Adrenal gland (tissue), 19 donors: ENCODE measurements at regions of chr9 and their contacts with region 1.

Region 1: DNA sequence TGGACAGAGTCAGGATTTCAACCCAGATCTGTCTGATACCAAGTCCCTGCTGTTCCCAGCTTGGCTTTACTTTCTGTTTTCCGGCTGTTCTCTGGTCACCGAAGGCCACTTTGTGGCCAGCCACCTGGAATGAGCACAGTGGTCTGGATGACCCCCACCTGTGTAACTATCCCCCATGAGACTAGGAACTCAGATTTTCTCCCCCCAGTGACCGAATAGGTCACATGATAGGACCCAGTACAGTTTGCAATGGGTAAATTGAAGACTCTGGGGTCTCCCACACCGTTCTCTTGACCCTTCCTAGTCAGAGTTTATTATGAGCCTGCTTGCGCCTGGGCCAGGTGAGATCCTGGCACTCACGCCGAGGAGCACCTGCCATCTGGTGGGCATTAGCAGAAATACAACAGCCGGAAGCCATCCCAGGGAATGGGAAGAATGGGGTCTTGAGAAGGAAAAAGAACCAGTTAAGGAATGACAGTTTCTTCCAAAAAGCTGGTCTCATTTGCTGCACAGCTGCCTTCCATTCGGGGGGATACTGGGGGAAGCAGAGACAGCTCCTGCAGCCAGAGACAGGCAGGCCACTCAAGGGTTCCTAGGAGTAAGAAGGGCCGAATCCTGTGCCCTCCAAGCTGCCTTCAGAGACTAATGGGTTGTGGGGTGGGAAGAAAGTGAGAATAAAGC is 7.1 kb downstream of the PHYHD1 start:
- DNase-seq: peak in 6 of 7 donors; percentile 42 to 78 (median 58)
- H3K4me3 ChIP-seq: no peak overlapping the region
- H3K27ac ChIP-seq: no peak overlapping the region
- H3K4me1 ChIP-seq: peaks cover 2 to 10% of the 10 kb centered on the region in 2 donors
- H3K27me3 ChIP-seq: no peaks in the 10 kb centered on the region
- CTCF ChIP-seq: peak; percentile 78 to 92 (median 88)
- POLR2A ChIP-seq: no peak

Region 2: DNA sequence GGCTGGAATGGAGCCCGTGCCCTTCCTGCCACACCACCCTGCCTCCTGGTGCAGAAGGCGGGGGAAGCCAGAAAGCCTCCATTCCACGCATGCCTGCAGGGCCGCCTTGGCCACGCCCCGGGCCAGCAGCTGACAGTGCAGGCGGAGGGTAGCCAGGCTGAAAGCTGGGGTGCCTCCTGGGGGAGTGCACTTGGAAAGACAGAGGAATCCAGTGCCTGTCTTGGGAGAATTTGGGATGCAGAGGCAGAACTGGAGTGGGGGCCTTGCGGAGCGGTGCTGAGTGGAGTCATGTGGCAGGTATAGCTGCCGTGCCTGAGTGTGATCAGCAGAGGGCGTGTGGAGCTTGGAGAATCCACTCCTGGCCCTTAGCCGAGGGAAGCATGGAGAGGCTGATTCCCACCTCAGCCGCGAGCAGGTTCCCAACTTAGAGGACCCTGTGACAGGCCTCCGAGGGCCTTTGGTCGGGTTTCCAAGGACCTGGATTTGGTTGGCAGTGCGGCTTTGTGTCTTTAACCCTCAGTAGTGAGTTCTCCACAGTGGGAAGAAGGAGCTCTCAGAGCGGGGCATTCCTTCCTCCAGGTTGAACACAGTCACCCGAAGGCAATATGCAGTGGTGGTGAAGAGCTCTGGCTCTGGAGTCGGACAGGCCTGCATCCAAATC is 565.8 kb before region 1 on chr9:
- intact Hi-C with region 1: no loop called
- DNase-seq: peak; percentile 83 to 94 (median 91)
- H3K4me3 ChIP-seq: peak overlapping the region in 2 of 4 donors; percentile 38 to 55
- H3K27ac ChIP-seq: peak overlapping the region in 2 of 5 donors; percentile 55 to 77
- H3K4me1 ChIP-seq: peaks cover 4 to 22% of the 10 kb centered on the region in 2 donors
- H3K27me3 ChIP-seq: no peaks in the 10 kb centered on the region
- CTCF ChIP-seq: peak; percentile 70 to 95 (median 92)
- POLR2A ChIP-seq: no peak

Region 3: DNA sequence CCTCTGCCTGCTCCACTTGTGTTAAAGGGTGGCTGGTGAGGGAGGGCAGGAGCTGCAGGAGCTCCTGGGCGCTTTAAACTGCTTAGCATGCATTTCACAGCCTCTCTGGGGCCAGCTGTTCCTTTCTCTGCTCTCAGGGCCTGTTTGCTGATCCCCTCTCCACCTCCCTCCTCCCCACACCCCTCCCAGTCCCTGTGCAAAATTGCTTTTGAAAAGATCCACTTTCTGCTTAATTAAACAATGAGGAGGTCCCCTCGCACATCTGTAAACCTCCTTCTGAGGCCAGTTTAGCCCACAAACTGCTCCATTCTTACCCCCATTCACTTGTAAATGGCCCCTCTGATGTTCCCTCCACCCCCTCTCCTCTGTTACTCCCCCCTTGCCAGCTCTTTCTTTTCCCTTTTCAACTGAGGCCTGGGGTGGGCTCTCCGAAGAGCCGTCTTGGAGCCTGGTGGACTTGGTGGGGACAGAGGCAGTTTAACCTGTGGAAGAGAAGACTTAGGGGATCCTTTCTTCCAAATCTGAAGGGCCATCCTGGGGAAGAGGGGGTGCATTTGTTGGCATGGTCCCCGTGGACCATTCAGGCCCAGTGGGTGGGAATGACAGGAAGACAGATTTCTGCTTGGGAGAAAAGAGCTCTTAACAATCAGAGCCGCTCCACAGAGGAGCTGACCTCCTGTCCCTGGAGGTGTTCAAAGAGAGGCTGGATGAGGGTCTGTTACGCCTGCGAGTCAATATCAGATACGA is 544.7 kb before region 1 on chr9:
- intact Hi-C with region 1: no loop called
- DNase-seq: no peak
- H3K4me3 ChIP-seq: no peak overlapping the region
- H3K27ac ChIP-seq: peak overlapping the region in 1 of 5 donors; percentile 64
- H3K4me1 ChIP-seq: no peaks in the 10 kb centered on the region
- H3K27me3 ChIP-seq: no peaks in the 10 kb centered on the region
- CTCF ChIP-seq: no peak
- POLR2A ChIP-seq: no peak

Region 4: GRCh38 chr9:128845155-128845931 is 82.5 kb before region 1 on chr9:
- intact Hi-C with region 1: no loop called
- DNase-seq: no peak
- H3K4me3 ChIP-seq: no peak overlapping the region
- H3K27ac ChIP-seq: no peak overlapping the region
- H3K4me1 ChIP-seq: no peaks in the 10 kb centered on the region
- H3K27me3 ChIP-seq: no peaks in the 10 kb centered on the region
- CTCF ChIP-seq: no peak
- POLR2A ChIP-seq: no peak

Region 5: GRCh38 chr9:128863647-128864046 is 64.2 kb before region 1 on chr9:
- intact Hi-C with region 1: loop called (anchors 2 to 5 kb)
- DNase-seq: peak; percentile 62 to 82 (median 74)
- H3K4me3 ChIP-seq: no peak overlapping the region
- H3K27ac ChIP-seq: no peak overlapping the region
- H3K4me1 ChIP-seq: no peaks in the 10 kb centered on the region
- H3K27me3 ChIP-seq: no peaks in the 10 kb centered on the region
- CTCF ChIP-seq: peak; percentile 90 to 99 (median 94)
- POLR2A ChIP-seq: no peak

Region 6: DNA sequence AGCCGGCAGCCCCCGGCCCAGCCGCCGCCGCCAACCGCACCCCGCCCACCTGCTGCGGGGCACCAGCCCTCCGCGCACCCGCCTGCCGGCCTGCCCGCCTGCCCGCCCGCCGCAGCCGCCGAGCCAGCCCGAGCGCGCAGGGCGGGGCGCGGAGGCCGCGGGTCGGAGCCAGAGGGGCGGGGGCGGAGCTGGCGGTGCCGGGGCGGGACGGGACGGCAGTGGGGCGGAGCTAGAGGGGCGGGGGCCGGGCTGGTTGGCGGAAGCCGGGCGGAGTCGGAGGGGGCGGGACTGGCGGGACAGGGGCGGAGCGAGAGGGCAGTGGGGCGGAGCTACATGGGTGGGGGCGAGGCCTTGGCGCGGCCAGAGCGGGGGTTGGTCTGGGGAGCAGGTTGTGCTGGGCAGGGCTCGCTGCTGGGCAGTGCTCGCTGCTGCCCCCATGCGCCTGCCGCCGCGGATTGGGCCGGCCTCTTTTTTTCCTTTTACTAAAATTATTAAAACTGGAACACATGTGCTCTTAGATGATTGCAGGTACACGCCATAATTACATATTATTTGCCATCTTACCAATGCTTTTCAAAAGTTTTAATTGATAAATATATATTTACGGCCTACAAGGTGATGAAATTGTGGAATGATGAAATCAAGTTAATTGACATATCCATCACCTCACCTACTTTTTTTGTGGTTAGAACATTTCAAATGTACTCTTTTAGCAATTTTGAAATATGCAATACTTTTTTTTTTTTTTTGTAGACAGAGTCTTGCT is 100.5 kb after region 1 on chr9 and contains the start of gene SH3GLB2:
- intact Hi-C with region 1: no loop called
- DNase-seq: peak; percentile 94 to 99 (median 96)
- H3K4me3 ChIP-seq: peak within 1 kb of the TSS; percentile 4 to 91 (median 42)
- H3K27ac ChIP-seq: peak within 1 kb of the TSS in 3 of 5 donors; percentile 42 to 87 (median 63)
- H3K4me1 ChIP-seq: peaks cover 16 to 29% of the 10 kb centered on the region in 2 donors
- H3K27me3 ChIP-seq: no peaks in the 10 kb centered on the region
- CTCF ChIP-seq: peak; percentile 58 to 91 (median 75)
- POLR2A ChIP-seq: peak in 1 of 2 donors; percentile 48
- total RNA-seq, gene SH3GLB2: 50.3 to 153 (median 96.8) TPM